AG04450 (cell line): ENCODE measurements at regions of chr1 and their contacts with region 1.

Region 1: GRCh38 chr1:31715087-31715872 is 11.5 kb upstream of the COL16A1 start:
- DNase-seq: peak; percentile 55
- H3K4me3 ChIP-seq: peak overlapping the region; percentile 48
- H3K27ac ChIP-seq: peak overlapping the region; percentile 84
- H3K27me3 ChIP-seq: peaks cover 5% of the 10 kb centered on the region
- CTCF ChIP-seq: peak; percentile 92

Region 2: GRCh38 chr1:31663622-31664452 is 51.4 kb before region 1 on chr1:
- CTCF ChIA-PET with region 1: interaction called, 10 read pairs
- POLR2A ChIA-PET with region 1: no interaction called
- DNase-seq: no peak
- H3K4me3 ChIP-seq: no peak overlapping the region
- H3K27ac ChIP-seq: no peak overlapping the region
- H3K27me3 ChIP-seq: no peaks in the 10 kb centered on the region
- CTCF ChIP-seq: peak; percentile 92

Region 3: GRCh38 chr1:31705080-31705866 is 10.0 kb before region 1 on chr1:
- CTCF ChIA-PET with region 1: interaction called, 41 read pairs
- POLR2A ChIA-PET with region 1: interaction called, 15 read pairs
- DNase-seq: no peak
- H3K4me3 ChIP-seq: peak overlapping the region; percentile 81
- H3K27ac ChIP-seq: peak overlapping the region; percentile 78
- H3K27me3 ChIP-seq: no peaks in the 10 kb centered on the region
- CTCF ChIP-seq: peak; percentile 40

Region 4: DNA sequence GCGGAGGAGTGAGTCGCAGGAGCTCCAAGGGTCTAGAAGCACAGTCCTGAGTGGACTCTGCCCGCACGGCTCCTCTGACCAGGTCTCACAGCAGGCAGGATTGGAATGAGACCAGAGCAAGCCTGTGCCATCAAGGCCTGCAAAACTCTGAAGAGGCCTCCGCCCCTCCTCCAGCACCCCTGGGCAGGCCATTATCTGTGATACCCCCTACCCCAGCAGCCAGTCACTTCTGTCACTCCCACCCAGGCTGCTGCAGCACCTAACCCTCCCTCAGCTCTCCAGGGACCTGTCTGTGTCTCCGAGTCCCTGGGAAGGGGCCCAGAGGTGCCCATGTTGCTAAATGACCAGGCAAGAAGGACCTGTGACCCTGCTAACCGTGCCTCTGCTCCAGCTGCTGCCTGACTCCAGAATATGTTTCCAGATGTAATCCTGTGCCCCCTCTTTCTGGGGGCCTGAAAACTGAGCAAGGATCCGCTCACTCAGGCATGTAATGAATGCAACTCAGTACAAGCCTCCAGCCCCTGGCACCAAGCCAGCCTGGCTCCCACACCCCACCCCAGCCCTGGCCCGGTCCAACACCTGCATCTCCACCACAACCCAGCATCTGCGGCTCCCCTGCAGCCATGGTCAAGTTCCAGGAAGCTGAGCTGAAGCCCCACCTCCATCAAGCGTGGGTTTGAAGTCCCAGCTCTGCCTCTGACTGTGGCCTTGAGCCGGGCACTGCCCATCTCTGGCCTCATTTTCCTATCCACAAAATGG is 10.7 kb after region 1 on chr1:
- CTCF ChIA-PET with region 1: interaction called, 17 read pairs
- POLR2A ChIA-PET with region 1: no interaction called
- DNase-seq: no peak
- H3K4me3 ChIP-seq: no peak overlapping the region
- H3K27ac ChIP-seq: no peak overlapping the region
- H3K27me3 ChIP-seq: peaks cover 2% of the 10 kb centered on the region
- CTCF ChIP-seq: no peak